ENCODE measurements at regions of chr11 and their contacts with region 1.

Region 1: DNA sequence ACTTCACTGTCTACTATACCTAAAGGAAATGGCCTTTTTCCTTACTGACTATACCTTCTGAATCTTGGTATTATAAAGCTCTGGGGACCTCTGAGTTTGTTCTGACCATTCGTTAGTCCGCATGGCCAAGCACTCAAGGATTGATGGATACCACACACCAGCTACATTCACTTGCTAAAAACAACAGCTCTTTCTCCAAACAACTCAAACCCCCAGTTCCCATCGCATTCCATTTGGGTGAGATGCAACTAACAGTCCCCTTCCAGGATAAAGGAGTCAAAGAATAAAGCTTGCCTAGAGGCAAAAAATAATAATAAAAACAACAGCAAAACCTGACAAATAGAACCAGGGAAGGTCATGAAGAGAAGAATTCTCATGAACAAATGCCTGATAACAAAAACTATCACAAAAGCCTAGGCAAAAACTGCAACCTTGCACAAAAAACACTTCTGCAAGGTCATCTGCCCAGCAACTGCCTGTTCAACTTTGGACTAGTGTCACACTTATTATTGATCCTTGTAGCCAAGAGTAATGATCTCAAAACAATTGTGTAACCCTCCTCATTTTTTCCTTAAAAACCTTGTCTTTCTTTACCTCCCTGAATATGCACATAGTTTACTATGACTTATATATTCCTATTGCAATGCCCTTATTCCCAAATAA is 139.0 kb upstream of the GUCY1A2 start:
- DNase-seq: no peak
- ATAC-seq: no peak
- H3K4me3 ChIP-seq: no peak overlapping the region
- H3K27ac ChIP-seq: no peak overlapping the region
- H3K4me1 ChIP-seq: no peaks in the 10 kb centered on the region
- H3K27me3 ChIP-seq: no peaks in the 10 kb centered on the region
- CTCF ChIP-seq: no peak

Region 2: GRCh38 chr11:106724293-106724892 is 432.9 kb before region 1 on chr11:
- CTCF ChIA-PET with region 1: no interaction called
- POLR2A ChIA-PET with region 1: no interaction called
- intact Hi-C with region 1: loop called (anchors 10 kb)
- DNase-seq: no peak
- ATAC-seq: no peak
- H3K4me3 ChIP-seq: no peak overlapping the region
- H3K27ac ChIP-seq: no peak overlapping the region
- H3K4me1 ChIP-seq: no peaks in the 10 kb centered on the region
- H3K27me3 ChIP-seq: no peaks in the 10 kb centered on the region
- CTCF ChIP-seq: no peak

Region 3: GRCh38 chr11:107017433-107018227 is 139.6 kb before region 1 on chr11:
- CTCF ChIA-PET with region 1: no interaction called
- POLR2A ChIA-PET with region 1: no interaction called
- intact Hi-C with region 1: loop called (anchors 10 kb)
- DNase-seq: peak; percentile 21
- ATAC-seq: peak; percentile 63
- H3K4me3 ChIP-seq: peak overlapping the region; percentile 57
- H3K27ac ChIP-seq: no peak overlapping the region
- H3K4me1 ChIP-seq: peaks cover 17% of the 10 kb centered on the region; the same call in 1 of the 2 replicates
- H3K27me3 ChIP-seq: peaks cover 61% of the 10 kb centered on the region
- CTCF ChIP-seq: peak; percentile 65

Region 4: DNA sequence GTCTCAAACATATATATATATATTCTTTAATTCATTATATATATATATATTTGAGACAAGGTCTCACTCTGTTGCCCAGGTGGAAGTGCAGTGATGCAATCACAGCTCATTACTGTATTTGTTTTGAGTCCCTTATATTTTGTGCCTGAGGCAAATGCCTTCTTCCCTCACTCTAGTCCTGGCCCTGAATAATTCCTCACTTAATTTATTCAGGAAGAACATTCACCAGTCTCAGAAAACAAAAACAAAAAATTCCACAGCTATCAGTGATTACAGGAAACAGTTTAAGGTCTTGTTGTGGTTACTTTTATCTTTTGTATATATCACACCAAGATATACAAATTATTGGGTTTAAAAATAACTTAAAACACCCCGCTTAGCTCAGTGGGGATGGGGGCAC is 144.6 kb after region 1 on chr11:
- CTCF ChIA-PET with region 1: no interaction called
- POLR2A ChIA-PET with region 1: no interaction called
- intact Hi-C with region 1: no loop called
- DNase-seq: peak; percentile 60
- ATAC-seq: peak; percentile 27; the same call in 1 of the 2 replicates
- H3K4me3 ChIP-seq: no peak overlapping the region
- H3K27ac ChIP-seq: no peak overlapping the region
- H3K4me1 ChIP-seq: peaks cover 9% of the 10 kb centered on the region; the same call in 1 of the 2 replicates
- H3K27me3 ChIP-seq: no peaks in the 10 kb centered on the region
- CTCF ChIP-seq: no peak

Region 5: DNA sequence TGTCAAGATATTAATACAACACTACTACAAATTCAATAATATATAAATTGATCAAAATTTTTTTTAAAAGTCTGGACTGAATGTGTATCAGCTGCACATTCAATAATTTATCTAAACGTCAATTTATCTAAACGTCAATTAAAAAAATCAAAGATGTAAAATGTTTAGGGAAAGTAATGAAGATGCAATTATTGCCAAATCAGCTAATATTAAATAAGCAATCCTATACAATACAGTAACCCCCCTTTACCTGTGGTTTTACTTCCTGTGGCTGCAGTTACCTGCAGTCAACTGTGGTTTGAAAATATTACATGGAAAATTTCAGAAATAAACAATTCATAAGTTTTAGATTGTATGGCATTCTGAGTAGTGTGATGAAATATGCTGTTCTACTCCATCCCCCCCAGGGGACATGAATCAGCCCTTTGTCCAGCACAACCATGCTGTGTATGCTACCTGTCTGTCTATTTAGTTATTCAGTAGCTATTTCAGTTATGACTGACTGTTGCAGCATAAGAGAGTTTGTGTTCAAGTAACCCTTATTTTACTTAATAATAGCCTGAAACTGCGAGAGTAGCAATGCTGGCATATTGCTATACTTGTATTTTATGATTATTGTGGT is 228.2 kb after region 1 on chr11:
- CTCF ChIA-PET with region 1: no interaction called
- POLR2A ChIA-PET with region 1: no interaction called
- intact Hi-C with region 1: loop called (anchors 10 kb)
- DNase-seq: peak; percentile 95
- ATAC-seq: peak; percentile 86
- H3K4me3 ChIP-seq: no peak overlapping the region
- H3K27ac ChIP-seq: peak overlapping the region; percentile 29
- H3K4me1 ChIP-seq: peaks cover 48% of the 10 kb centered on the region
- H3K27me3 ChIP-seq: no peaks in the 10 kb centered on the region
- CTCF ChIP-seq: no peak

Region 6: DNA sequence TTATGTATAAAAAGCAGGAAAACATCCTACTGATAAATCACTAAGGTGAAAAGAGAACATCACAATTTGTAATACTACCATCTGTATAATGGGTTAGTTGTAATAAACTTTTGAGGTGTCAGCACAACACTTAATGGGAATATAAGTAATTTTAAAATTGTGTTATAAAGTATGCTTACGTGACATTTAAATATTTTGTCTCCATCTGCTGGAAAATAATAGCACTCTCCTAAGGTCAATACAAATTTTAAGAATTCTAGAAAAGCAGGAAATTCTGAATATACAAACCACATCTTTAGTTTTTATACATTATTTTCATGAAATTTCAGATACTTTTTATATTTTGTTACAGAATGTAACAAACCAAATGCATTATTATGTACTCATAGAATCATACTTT is 280.9 kb after region 1 on chr11:
- CTCF ChIA-PET with region 1: no interaction called
- POLR2A ChIA-PET with region 1: no interaction called
- intact Hi-C with region 1: loop called (anchors 10 kb)
- DNase-seq: no peak
- ATAC-seq: no peak
- H3K4me3 ChIP-seq: no peak overlapping the region
- H3K27ac ChIP-seq: no peak overlapping the region
- H3K4me1 ChIP-seq: no peaks in the 10 kb centered on the region
- H3K27me3 ChIP-seq: no peaks in the 10 kb centered on the region
- CTCF ChIP-seq: peak; percentile 54

Measured in PC-3 (cell line).